ENCODE measurements at regions of chr5 and their contacts with region 1.

Region 1: DNA sequence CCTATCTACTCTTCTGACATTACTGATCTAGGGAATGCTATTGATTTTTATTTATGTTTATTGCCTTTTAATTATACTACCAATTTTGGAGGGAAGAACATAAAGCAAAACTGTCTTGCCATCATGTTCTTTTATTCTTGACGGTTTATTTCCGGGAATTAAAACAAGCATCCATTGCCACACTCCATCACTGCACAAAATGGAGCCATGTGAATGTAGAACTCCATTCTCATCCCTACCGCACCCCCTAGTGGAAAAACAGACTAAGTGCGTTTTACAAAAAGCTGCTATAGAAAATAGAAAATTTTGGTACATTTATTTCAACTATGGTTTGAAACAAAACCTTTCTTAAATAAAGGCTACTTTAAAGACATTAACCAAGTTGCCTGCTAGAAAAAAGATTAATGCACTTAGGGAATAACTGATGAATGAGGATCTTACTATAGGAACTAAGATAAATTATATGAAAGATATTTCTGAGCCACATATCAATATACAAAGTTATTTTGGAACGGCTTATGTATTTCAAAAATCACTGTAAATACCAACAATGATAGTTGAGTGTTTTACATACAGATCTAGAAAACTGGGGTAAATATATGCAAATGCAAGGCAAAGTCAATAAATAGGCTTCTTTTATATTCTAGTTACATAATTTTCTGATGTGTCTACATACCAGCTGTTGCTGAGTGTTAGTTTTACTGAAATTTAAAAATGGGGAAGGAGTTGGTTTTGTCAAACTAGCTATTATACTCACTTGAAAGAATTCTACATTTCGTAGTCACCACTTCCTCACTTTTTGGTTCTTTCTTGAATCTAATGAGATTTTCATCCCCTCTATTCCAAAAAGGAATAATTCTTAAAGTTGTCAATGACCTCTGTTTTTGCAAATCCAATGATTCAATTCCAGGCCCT is 26.5 kb downstream of the OXCT1 start:
- DNase-seq: peak; percentile 42 to 69
- H3K4me3 ChIP-seq: no peak overlapping the region
- H3K4me3 Mint-ChIP-seq: no peak overlapping the region
- H3K27ac Mint-ChIP-seq: no peak overlapping the region
- H3K4me1 ChIP-seq: no peaks in the 10 kb centered on the region
- H3K4me1 Mint-ChIP-seq: no peaks in the 10 kb centered on the region
- H3K27me3 ChIP-seq: no peaks in the 10 kb centered on the region
- H3K27me3 Mint-ChIP-seq: no peaks in the 10 kb centered on the region
- CTCF ChIP-seq: peak; percentile 79 to 80

Region 2: DNA sequence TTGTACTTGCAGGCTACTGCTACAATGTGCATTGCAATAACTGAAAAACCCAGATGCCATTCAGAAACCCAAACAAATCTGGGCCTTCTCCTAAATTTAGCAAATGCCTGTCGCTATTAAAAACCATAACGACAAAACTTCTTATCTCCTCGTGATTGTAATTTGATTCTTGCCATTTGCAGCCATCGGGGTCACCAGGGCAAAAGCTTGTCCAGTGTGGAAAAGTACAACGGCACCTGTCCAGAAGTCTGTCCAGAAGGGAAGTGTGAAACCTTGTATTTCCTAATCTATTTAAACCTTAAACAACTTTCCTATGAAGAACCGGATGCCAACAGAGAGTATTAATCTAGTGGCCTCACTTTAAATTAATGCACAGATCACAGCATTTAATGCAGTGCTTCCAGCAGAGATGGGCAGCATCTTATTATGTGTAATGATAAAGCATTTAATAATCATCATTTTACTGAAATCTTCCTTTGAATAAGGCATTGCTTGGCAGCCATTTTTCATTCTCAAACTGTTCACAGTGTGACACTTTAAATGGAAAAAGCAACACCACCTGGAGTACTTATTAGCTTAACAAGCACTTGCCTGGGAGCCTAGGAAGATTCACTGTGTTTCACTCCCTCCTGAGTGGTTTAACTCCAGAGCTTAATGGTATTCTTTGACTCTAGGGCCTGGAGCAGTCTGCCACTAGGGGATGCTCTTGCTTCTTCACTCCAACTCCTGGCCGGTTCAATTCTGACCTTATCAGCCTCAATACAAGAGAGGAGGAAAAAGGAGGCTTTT is 939.3 kb before region 1 on chr5:
- CTCF ChIA-PET with region 1: no interaction called
- POLR2A ChIA-PET with region 1: no interaction called
- intact Hi-C with region 1: loop called (anchors 1 kb)
- DNase-seq: peak; percentile 57 to 61
- H3K4me3 ChIP-seq: no peak overlapping the region
- H3K4me3 Mint-ChIP-seq: no peak overlapping the region
- H3K27ac Mint-ChIP-seq: no peak overlapping the region
- H3K4me1 ChIP-seq: no peaks in the 10 kb centered on the region
- H3K4me1 Mint-ChIP-seq: peaks cover 9% of the 10 kb centered on the region
- H3K27me3 ChIP-seq: no peaks in the 10 kb centered on the region
- H3K27me3 Mint-ChIP-seq: peaks cover 5% of the 10 kb centered on the region
- CTCF ChIP-seq: peak; percentile 80 to 97

Region 3: DNA sequence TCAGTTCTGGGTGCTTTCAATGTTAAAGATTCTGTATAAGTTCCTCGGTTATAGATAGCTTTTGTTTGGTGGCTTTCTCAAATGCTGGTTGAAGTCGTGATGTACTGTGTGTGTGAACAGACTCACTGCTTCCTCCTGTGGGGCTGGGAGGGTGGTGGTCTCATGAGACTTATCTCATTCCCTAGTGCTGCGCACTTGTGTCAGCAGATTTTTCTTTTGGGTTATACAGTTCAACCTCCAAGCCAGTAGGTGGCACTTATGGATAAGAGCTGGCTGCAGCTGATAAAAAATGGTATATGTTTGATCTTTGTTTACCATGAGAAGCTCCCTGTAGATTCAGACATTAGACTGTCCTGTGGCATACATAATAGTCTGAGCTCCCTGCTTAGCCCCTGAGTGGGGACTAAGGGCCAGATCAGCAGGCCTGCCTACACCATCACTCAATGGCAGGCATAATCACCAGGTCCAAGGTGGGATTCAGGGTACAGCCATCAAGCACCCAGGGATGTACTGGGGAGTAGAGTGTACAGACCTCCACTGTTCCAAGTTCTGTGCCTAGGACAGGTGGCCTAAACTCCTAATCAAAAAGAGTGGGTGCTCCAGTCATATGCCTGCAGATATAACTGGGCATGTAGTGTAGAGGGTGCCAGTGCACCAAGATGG is 147.7 kb before region 1 on chr5:
- CTCF ChIA-PET with region 1: no interaction called
- POLR2A ChIA-PET with region 1: no interaction called
- intact Hi-C with region 1: loop called (anchors 1 kb)
- DNase-seq: peak in 1 of 2 experiments; percentile 18
- H3K4me3 ChIP-seq: no peak overlapping the region
- H3K4me3 Mint-ChIP-seq: no peak overlapping the region
- H3K27ac Mint-ChIP-seq: no peak overlapping the region
- H3K4me1 ChIP-seq: no peaks in the 10 kb centered on the region
- H3K4me1 Mint-ChIP-seq: no peaks in the 10 kb centered on the region
- H3K27me3 ChIP-seq: no peaks in the 10 kb centered on the region
- H3K27me3 Mint-ChIP-seq: peaks cover 14% of the 10 kb centered on the region
- CTCF ChIP-seq: peak in 1 of 2 experiments; percentile 27

Region 4: DNA sequence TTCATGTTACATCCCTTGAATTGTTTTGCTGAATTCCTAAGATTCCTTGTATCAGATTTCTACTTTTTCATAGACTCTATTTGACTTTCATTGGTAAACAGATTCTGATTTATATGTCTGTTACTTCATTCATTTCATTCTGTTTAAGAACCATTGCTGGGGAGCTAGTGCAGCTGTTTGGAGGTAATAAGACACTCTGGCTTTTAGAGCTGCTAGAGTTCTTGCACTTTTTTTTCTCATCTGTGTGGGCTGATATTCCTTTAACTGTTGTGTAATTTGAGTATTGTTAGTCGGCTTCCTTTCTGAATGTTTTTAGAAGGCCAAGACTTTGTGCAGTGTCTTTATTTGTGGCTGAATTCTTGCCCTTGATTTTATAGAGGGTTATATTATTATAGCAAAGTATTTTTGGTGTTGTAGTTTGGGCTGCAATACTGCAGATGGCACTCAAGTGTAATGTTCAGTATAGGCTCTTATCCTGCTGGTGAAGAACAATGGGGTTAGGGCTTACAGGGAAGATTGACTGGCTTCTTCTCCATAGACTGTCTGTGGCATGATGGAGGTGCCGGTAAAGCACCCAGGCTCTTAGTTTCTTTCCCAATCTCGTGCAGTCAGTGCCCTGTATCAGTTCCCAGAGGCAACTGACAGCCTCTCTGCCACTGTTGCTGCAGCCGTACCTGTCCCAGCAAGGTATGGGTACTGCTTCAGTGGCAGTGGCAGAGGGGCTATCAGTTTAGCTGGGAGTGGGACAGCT is 135.7 kb before region 1 on chr5:
- CTCF ChIA-PET with region 1: interaction called, 3 read pairs
- POLR2A ChIA-PET with region 1: no interaction called
- intact Hi-C with region 1: loop called (anchors 1 kb)
- DNase-seq: peak in 1 of 2 experiments; percentile 26
- H3K4me3 ChIP-seq: no peak overlapping the region
- H3K4me3 Mint-ChIP-seq: no peak overlapping the region
- H3K27ac Mint-ChIP-seq: no peak overlapping the region
- H3K4me1 ChIP-seq: no peaks in the 10 kb centered on the region
- H3K4me1 Mint-ChIP-seq: no peaks in the 10 kb centered on the region
- H3K27me3 ChIP-seq: no peaks in the 10 kb centered on the region
- H3K27me3 Mint-ChIP-seq: peaks cover 3% of the 10 kb centered on the region
- CTCF ChIP-seq: peak; percentile 35 to 41

Region 5: GRCh38 chr5:41754857-41755256 is 88.9 kb before region 1 on chr5:
- CTCF ChIA-PET with region 1: no interaction called
- POLR2A ChIA-PET with region 1: no interaction called
- intact Hi-C with region 1: loop called (anchors 1 kb)
- DNase-seq: no peak
- H3K4me3 ChIP-seq: no peak overlapping the region
- H3K4me3 Mint-ChIP-seq: no peak overlapping the region
- H3K27ac Mint-ChIP-seq: no peak overlapping the region
- H3K4me1 ChIP-seq: no peaks in the 10 kb centered on the region
- H3K4me1 Mint-ChIP-seq: no peaks in the 10 kb centered on the region
- H3K27me3 ChIP-seq: no peaks in the 10 kb centered on the region
- H3K27me3 Mint-ChIP-seq: no peaks in the 10 kb centered on the region
- CTCF ChIP-seq: peak in 1 of 2 experiments; percentile 40

Region 6: DNA sequence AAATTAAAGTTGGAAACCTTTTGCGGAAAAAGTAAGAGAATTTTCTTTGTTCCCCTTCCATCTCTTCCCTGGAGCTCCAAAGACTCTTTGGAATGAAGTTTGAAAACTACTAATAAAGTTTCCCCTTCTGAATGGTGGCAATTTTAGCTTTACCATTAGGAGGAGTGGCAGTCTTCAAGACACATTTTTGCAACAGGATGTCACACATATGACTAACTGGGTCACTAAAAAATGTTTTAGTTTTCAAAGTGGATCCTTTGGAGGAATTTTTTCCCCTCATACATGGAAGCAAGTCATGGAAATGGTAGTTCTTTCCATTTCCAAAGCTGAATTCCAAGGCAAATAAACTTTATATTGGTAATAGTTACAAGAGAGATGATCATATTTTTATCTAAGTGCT is 96.9 kb after region 1 on chr5:
- CTCF ChIA-PET with region 1: no interaction called
- POLR2A ChIA-PET with region 1: no interaction called
- intact Hi-C with region 1: no loop called
- DNase-seq: no peak
- H3K4me3 ChIP-seq: no peak overlapping the region
- H3K4me3 Mint-ChIP-seq: no peak overlapping the region
- H3K27ac Mint-ChIP-seq: no peak overlapping the region
- H3K4me1 ChIP-seq: no peaks in the 10 kb centered on the region
- H3K4me1 Mint-ChIP-seq: no peaks in the 10 kb centered on the region
- H3K27me3 ChIP-seq: no peaks in the 10 kb centered on the region
- H3K27me3 Mint-ChIP-seq: no peaks in the 10 kb centered on the region
- CTCF ChIP-seq: no peak